CD8-positive, alpha-beta T cell (primary cell): ENCODE measurements at regions of chrX and their contacts with region 1.

Region 1: GRCh38 chrX:97597954-97598353 is 714.2 kb downstream of the RPA4 start:
- DNase-seq: peak in 2 of 9 experiments; percentile 1 to 10
- ATAC-seq: no peak
- H3K4me3 ChIP-seq: no peak overlapping the region
- H3K4me3 Mint-ChIP-seq: no peak overlapping the region
- H3K27ac ChIP-seq: no peak overlapping the region
- H3K27ac Mint-ChIP-seq: peak overlapping the region; percentile 62
- H3K4me1 ChIP-seq: no peaks in the 10 kb centered on the region
- H3K4me1 Mint-ChIP-seq: peaks cover 6% of the 10 kb centered on the region
- H3K27me3 ChIP-seq: no peaks in the 10 kb centered on the region
- H3K27me3 Mint-ChIP-seq: no peaks in the 10 kb centered on the region
- CTCF ChIP-seq: no peak

Region 2: GRCh38 chrX:97461763-97462162 is 136.2 kb before region 1 on chrX:
- CTCF ChIA-PET with region 1: no interaction called
- POLR2A ChIA-PET with region 1: no interaction called
- intact Hi-C with region 1: no loop called
- DNase-seq: no peak
- ATAC-seq: no peak
- H3K4me3 ChIP-seq: no peak overlapping the region
- H3K4me3 Mint-ChIP-seq: no peak overlapping the region
- H3K27ac ChIP-seq: no peak overlapping the region
- H3K27ac Mint-ChIP-seq: no peak overlapping the region
- H3K4me1 ChIP-seq: no peaks in the 10 kb centered on the region
- H3K4me1 Mint-ChIP-seq: no peaks in the 10 kb centered on the region
- H3K27me3 ChIP-seq: no peaks in the 10 kb centered on the region
- H3K27me3 Mint-ChIP-seq: no peaks in the 10 kb centered on the region
- CTCF ChIP-seq: no peak

Region 3: DNA sequence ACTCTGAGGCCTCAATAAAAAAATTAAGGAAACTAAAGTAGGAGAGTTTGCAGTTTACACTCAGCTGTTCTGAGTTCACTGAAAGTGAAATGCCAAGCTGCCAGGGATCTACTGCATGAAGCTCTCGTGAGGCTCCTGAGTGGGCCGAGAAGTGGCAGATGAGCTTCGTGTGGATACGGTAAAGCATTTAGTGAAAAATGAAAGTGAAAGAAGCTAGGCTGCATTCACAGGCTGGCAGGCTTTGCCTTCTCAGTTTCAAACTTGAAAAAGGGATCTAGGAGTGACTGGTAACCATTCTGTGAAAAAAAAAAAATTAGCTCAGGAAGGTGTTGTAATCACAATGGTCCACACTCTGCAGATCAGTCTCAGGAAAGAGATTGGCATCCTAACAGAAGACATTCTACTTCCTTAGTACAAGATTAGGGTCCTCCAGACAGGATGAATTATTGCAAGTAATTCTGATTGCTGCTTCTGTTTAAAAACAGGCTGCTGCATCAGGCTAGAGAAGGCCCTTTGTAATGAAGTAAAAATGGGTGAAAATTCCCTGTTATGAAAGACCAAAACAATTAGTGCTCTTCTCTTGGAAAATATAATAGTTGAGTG is 34.3 kb before region 1 on chrX:
- CTCF ChIA-PET with region 1: no interaction called
- POLR2A ChIA-PET with region 1: no interaction called
- intact Hi-C with region 1: loop called in 1 of 2 experiments (anchors 1 kb)
- DNase-seq: peak; percentile 0 to 75 (median 30)
- ATAC-seq: peak; percentile 94
- H3K4me3 ChIP-seq: peak overlapping the region; percentile 28 to 34
- H3K4me3 Mint-ChIP-seq: peak overlapping the region; percentile 80
- H3K27ac ChIP-seq: peak overlapping the region; percentile 24 to 70
- H3K27ac Mint-ChIP-seq: peak overlapping the region; percentile 96
- H3K4me1 ChIP-seq: peaks cover 5% of the 10 kb centered on the region
- H3K4me1 Mint-ChIP-seq: peaks cover 15% of the 10 kb centered on the region
- H3K27me3 ChIP-seq: no peaks in the 10 kb centered on the region
- H3K27me3 Mint-ChIP-seq: no peaks in the 10 kb centered on the region
- CTCF ChIP-seq: no peak